ENCODE measurements at regions of chr10 and their contacts with region 1.

Region 1: DNA sequence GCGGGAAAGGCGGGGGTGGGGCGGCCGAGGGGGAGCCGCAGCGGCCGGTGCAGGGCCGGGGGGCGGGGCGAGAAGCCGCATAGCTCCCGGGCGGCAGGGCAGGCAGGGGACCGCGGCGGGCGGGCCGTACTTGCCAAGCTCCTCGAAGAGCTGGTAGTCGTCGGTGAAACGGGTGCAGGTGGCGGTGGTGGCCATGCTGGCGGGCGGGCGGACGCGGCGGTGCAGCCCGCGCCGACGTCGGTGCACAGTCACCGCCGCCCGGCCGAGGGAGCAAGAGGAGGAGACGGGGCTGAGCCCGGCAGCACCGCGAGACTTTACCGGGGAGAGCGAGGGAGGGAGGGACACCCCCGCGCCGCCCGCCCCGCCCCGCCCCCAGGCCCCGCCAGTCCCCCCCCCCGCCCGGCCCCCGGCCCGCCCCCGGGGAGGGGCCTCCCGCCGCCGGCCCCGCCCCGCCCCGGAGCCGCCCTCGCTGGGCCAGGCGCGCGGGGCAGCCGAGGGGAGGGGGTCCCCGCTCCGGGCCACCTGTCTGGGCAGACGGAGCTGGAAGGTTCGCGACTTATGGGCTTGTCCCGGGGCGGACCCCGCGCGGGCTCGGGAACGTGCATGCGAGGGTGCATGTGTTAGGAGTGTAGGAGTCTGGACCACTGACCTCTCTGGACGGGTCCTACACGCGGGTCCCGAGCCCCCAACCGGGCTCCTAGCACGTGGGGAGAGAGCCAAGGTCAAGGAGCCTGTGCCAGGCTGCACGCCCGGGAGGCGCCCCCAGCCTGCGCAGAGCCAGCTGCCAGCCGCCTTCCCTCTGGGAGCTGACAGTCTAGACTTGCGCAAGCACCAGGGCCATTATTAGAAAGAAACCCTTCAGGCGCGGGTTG is at the start of gene CAMK2G:
- DNase-seq: peak; percentile 89
- H3K4me3 Mint-ChIP-seq: peak within 1 kb of the TSS; percentile 84
- H3K27ac Mint-ChIP-seq: peak within 1 kb of the TSS; percentile 88
- H3K4me1 Mint-ChIP-seq: peaks cover 68% of the 10 kb centered on the region
- H3K27me3 Mint-ChIP-seq: no peaks in the 10 kb centered on the region
- total RNA-seq, gene CAMK2G: 22.9 to 26.3 TPM

Region 2: GRCh38 chr10:72834183-72834825 is 1040.2 kb before region 1 on chr10:
- CTCF ChIA-PET with region 1: no interaction called
- intact Hi-C with region 1: no loop called
- DNase-seq: peak; percentile 61
- H3K4me3 Mint-ChIP-seq: no peak overlapping the region
- H3K27ac Mint-ChIP-seq: no peak overlapping the region
- H3K4me1 Mint-ChIP-seq: no peaks in the 10 kb centered on the region
- H3K27me3 Mint-ChIP-seq: no peaks in the 10 kb centered on the region

Region 3: GRCh38 chr10:73857446-73857845 is 17.1 kb before region 1 on chr10:
- CTCF ChIA-PET with region 1: interaction called, 443 read pairs
- intact Hi-C with region 1: loop called (anchors 1 kb)
- DNase-seq: peak; percentile 77
- H3K4me3 Mint-ChIP-seq: no peak overlapping the region
- H3K27ac Mint-ChIP-seq: peak overlapping the region; percentile 73
- H3K4me1 Mint-ChIP-seq: peaks cover 47% of the 10 kb centered on the region
- H3K27me3 Mint-ChIP-seq: no peaks in the 10 kb centered on the region

Measured in activated naive CD4-positive, alpha-beta T cell treated with anti-CD3 and anti-CD28 coated beads for 36 hours (primary cell).